HCT116 (cell line): ENCODE measurements at regions of chr9 and their contacts with region 1.

Region 1: GRCh38 chr9:6197330-6197729 is 18.3 kb upstream of the IL33 start:
- DNase-seq: peak; percentile 12
- ATAC-seq: peak; percentile 62
- H3K4me3 ChIP-seq: no peak overlapping the region
- H3K27ac ChIP-seq: no peak overlapping the region
- H3K4me1 ChIP-seq: no peaks in the 10 kb centered on the region
- H3K27me3 ChIP-seq: no peaks in the 10 kb centered on the region
- CTCF ChIP-seq: peak; percentile 15 to 50 (median 32); a peak in 4 of 6 replicates
- POLR2A ChIP-seq: no peak
- RAD21 ChIP-seq: peak; percentile 53

Region 2: GRCh38 chr9:6305954-6306563 is 108.7 kb after region 1 on chr9:
- CTCF ChIA-PET with region 1: interaction called, 42 read pairs
- POLR2A ChIA-PET with region 1: no interaction called
- RAD21 ChIA-PET with region 1: no interaction called
- intact Hi-C with region 1: loop called (anchors 5 kb)
- DNase-seq: peak; percentile 32
- ATAC-seq: peak; percentile 78
- H3K4me3 ChIP-seq: no peak overlapping the region
- H3K27ac ChIP-seq: no peak overlapping the region
- H3K4me1 ChIP-seq: peaks cover 3 to 6% of the 10 kb centered on the region in 2 experiments; a peak in 1 of 4 replicates
- H3K27me3 ChIP-seq: no peaks in the 10 kb centered on the region
- CTCF ChIP-seq: peak; percentile 48 to 81 (median 69)
- POLR2A ChIP-seq: no peak
- RAD21 ChIP-seq: peak; percentile 89

Region 3: GRCh38 chr9:6367128-6367890 is 170.0 kb after region 1 on chr9:
- CTCF ChIA-PET with region 1: no interaction called
- POLR2A ChIA-PET with region 1: no interaction called
- RAD21 ChIA-PET with region 1: no interaction called
- intact Hi-C with region 1: no loop called
- DNase-seq: no peak
- ATAC-seq: no peak
- H3K4me3 ChIP-seq: no peak overlapping the region
- H3K27ac ChIP-seq: no peak overlapping the region
- H3K4me1 ChIP-seq: no peaks in the 10 kb centered on the region
- H3K27me3 ChIP-seq: no peaks in the 10 kb centered on the region
- CTCF ChIP-seq: no peak
- POLR2A ChIP-seq: no peak
- RAD21 ChIP-seq: no peak